CD4-positive, alpha-beta memory T cell (primary cell): ENCODE measurements at regions of chr10 and their contacts with region 1.

Region 1: GRCh38 chr10:112307358-112308124 is 24.3 kb downstream of the TECTB start:
- DNase-seq: peak in 4 of 5 donors; percentile 6 to 14 (median 11)
- H3K4me3 ChIP-seq: no peak overlapping the region
- H3K4me3 Mint-ChIP-seq: no peak overlapping the region
- H3K27ac ChIP-seq: no peak overlapping the region
- H3K27ac Mint-ChIP-seq: no peak overlapping the region
- H3K4me1 ChIP-seq: no peaks in the 10 kb centered on the region
- H3K4me1 Mint-ChIP-seq: no peaks in the 10 kb centered on the region
- H3K27me3 ChIP-seq: no peaks in the 10 kb centered on the region
- H3K27me3 Mint-ChIP-seq: peaks cover 8 to 20% of the 10 kb centered on the region in 2 donors

Region 2: DNA sequence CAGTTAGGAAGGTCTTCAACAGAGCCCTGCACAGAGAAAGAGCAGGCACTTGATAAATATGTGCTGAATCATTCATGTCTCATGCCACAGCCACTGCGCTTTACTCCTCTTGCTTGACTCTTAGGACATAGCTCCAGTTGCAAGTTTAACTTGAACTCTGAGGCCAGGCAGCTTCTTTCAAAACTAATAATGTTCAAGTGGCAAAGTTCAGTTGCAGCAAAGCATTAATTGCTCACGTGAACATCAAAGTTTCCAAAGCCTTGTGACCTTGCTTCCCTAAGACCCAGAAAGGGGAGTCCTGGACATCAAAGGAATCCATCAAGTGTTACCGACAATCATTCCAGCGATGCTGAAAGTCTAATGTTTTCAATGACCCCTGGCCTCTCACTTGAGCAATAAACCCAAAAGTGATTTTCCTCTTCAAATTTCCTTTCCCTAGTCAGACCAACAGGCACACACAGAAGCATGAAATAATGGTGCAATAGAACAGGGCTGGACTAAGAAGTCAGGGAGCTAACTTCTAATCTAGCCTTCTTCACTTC is 46.2 kb before region 1 on chr10:
- CTCF ChIA-PET with region 1: no interaction called
- POLR2A ChIA-PET with region 1: no interaction called
- intact Hi-C with region 1: no loop called
- DNase-seq: no peak
- H3K4me3 ChIP-seq: no peak overlapping the region
- H3K4me3 Mint-ChIP-seq: no peak overlapping the region
- H3K27ac ChIP-seq: no peak overlapping the region
- H3K27ac Mint-ChIP-seq: no peak overlapping the region
- H3K4me1 ChIP-seq: no peaks in the 10 kb centered on the region
- H3K4me1 Mint-ChIP-seq: no peaks in the 10 kb centered on the region
- H3K27me3 ChIP-seq: no peaks in the 10 kb centered on the region
- H3K27me3 Mint-ChIP-seq: no peaks in the 10 kb centered on the region

Region 3: DNA sequence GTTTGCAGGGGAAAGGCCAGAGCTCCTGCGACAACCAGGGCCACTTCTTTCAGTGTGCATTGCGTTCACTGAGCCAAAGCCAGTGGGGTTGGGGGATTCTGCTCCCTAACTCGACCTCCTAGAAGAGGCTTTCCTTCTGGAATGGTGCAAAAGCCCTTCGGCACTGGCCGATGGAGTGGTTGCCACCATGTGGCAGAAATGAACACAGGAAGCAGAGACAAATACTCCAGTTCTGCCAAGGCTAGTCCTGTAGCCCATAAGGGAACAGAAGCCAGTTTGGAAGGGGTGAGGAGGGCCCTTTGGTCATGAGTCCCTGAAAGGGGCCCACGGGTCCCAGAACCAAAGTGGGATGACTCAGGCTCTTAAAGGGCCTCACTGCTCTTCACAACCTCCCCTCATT is 36.7 kb after region 1 on chr10:
- CTCF ChIA-PET with region 1: no interaction called
- POLR2A ChIA-PET with region 1: no interaction called
- intact Hi-C with region 1: no loop called
- DNase-seq: no peak
- H3K4me3 ChIP-seq: no peak overlapping the region
- H3K4me3 Mint-ChIP-seq: no peak overlapping the region
- H3K27ac ChIP-seq: no peak overlapping the region
- H3K27ac Mint-ChIP-seq: no peak overlapping the region
- H3K4me1 ChIP-seq: no peaks in the 10 kb centered on the region
- H3K4me1 Mint-ChIP-seq: no peaks in the 10 kb centered on the region
- H3K27me3 ChIP-seq: no peaks in the 10 kb centered on the region
- H3K27me3 Mint-ChIP-seq: no peaks in the 10 kb centered on the region

Region 4: GRCh38 chr10:112434988-112435619 is 127.6 kb after region 1 on chr10:
- CTCF ChIA-PET with region 1: interaction called, 13 read pairs
- POLR2A ChIA-PET with region 1: no interaction called
- intact Hi-C with region 1: no loop called
- DNase-seq: peak in 3 of 5 donors; percentile 13 to 28 (median 17)
- H3K4me3 ChIP-seq: no peak overlapping the region
- H3K4me3 Mint-ChIP-seq: no peak overlapping the region
- H3K27ac ChIP-seq: no peak overlapping the region
- H3K27ac Mint-ChIP-seq: peak overlapping the region in 1 of 7 donors; percentile 73
- H3K4me1 ChIP-seq: no peaks in the 10 kb centered on the region
- H3K4me1 Mint-ChIP-seq: peaks cover 0 to 3% (median 0%) of the 10 kb centered on the region in 4 donors
- H3K27me3 ChIP-seq: no peaks in the 10 kb centered on the region
- H3K27me3 Mint-ChIP-seq: no peaks in the 10 kb centered on the region